Ovary (tissue), 10 donors: ENCODE measurements at regions of chr6 and their contacts with region 1.

Region 1: GRCh38 chr6:137313928-137314855 is 95.0 kb upstream of the IFNGR1 start:
- DNase-seq: peak; percentile 60 to 80 (median 76)
- H3K4me3 ChIP-seq: no peak overlapping the region
- H3K27ac ChIP-seq: no peak overlapping the region
- H3K4me1 ChIP-seq: peaks cover 3% of the 10 kb centered on the region
- H3K27me3 ChIP-seq: no peaks in the 10 kb centered on the region
- CTCF ChIP-seq: peak; percentile 45 to 60 (median 49)
- EP300 ChIP-seq: no peak
- POLR2A ChIP-seq: no peak

Region 2: GRCh38 chr6:137094411-137095008 is 219.7 kb before region 1 on chr6:
- intact Hi-C with region 1: loop called (anchors 5 to 10 kb)
- DNase-seq: peak; percentile 25 to 69 (median 51)
- H3K4me3 ChIP-seq: no peak overlapping the region
- H3K27ac ChIP-seq: no peak overlapping the region
- H3K4me1 ChIP-seq: no peaks in the 10 kb centered on the region
- H3K27me3 ChIP-seq: no peaks in the 10 kb centered on the region
- CTCF ChIP-seq: peak; percentile 57 to 73 (median 69)
- EP300 ChIP-seq: no peak
- POLR2A ChIP-seq: no peak

Region 3: DNA sequence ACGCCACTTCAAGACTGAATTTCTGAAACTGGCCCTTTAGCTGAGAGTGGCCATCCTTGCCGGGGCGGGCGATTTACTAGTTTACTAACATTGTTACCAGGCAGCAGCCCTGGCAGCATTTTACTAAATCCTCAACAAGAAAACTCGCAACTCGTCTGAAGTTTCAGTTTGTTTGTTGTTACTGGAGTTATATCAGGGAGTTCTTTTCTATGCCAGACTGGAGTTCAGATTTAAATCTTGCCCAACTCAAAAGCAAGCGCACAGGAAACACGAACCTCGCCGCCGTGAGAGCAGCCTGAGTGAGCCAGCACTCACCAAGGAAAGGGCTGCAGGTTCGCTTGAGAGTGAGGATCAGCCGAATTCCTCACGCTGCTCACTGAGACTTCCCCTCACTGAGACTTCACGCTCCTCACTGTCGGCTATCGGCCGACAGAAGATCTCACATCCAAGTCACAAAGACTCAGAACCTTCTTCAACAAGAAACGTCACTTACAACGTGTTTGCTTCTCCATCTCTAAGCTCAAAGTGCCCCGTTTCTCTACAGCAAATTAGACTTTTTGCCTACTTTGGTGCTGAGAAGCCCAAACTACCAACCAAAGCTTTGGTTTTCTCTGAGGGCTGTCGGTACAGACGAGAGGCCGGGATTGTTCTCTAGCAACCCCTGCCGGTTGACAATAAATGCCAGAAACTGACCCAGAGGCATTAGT is 101.1 kb after region 1 on chr6:
- intact Hi-C with region 1: no loop called
- DNase-seq: peak; percentile 23 to 58 (median 32)
- H3K4me3 ChIP-seq: peak overlapping the region; percentile 19
- H3K27ac ChIP-seq: no peak overlapping the region
- H3K4me1 ChIP-seq: peaks cover 1% of the 10 kb centered on the region
- H3K27me3 ChIP-seq: no peaks in the 10 kb centered on the region
- CTCF ChIP-seq: peak in 1 of 3 donors; percentile 38
- EP300 ChIP-seq: no peak
- POLR2A ChIP-seq: no peak

Region 4: DNA sequence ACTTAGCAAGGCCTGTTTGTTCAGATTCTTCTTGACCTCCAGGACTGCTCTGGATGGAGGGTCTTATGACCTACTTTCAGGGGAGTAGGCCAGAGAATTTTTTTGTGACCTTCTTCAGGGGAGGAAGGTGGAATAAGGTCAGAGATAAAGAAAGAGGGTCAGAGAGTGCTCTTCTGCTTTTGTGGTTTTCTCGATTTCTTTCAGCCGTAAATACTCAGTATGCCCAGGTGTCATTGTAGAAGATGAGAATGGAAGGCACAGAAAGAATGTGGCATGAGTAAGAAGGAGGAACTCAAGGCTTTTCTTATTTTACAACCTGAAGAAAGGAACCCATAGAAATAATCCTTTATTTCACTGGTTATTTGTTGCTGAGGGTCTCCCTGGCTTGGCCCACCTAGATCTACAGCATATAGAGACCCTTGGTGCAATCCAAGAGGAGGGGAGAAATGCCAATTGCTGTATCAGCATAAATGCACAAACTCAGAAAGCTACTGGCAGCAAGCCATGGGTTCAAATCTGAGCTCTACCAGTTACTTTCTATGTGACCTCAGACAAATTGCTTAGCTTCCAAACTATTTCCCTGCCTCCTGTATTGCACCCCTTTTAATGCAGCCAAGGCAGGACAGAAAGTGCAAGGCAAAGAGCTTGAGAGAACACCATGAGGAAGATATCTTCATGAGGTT is 112.0 kb after region 1 on chr6:
- intact Hi-C with region 1: no loop called
- DNase-seq: no peak
- H3K4me3 ChIP-seq: no peak overlapping the region
- H3K27ac ChIP-seq: no peak overlapping the region
- H3K4me1 ChIP-seq: no peaks in the 10 kb centered on the region
- H3K27me3 ChIP-seq: no peaks in the 10 kb centered on the region
- CTCF ChIP-seq: no peak
- EP300 ChIP-seq: no peak
- POLR2A ChIP-seq: no peak